BJ (cell line): ENCODE measurements at regions of chr1 and their contacts with region 1.

Region 1: DNA sequence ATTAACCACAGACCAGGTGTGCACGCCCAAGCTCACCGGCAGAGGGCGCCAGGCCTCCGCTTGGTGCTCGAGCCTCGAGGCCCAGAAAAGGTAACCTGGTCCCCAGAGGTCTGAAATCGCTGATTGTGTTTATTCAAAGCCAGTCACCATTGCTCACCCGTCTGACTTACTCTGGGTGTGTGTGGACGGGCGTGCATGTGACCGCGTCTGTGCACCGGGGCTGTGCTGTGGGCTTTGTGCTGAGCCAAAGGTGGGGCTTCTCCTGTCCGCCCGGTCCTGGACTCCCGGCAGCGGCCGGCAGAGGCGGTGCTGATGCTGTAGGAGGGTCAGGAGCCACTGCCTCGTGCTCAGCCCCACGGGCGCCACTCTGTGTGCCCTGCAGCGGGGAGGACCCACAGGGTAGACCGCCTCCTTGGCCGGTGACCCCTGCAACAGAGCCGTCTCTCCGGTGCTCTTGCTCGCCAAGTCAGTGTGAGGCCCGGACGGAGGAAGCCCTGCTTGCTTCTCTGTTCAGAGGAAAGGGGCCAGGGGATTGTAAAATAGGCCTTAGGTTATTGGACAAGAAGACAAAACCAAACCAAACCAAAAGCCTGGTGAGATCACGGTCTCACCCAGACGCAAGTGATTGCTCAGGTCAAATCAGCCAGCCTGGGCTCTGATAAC is 32.0 kb upstream of the BTG2 start:
- DNase-seq: no peak
- H3K4me3 ChIP-seq: no peak overlapping the region
- H3K27me3 ChIP-seq: no peaks in the 10 kb centered on the region
- CTCF ChIP-seq: peak; percentile 98

Region 2: DNA sequence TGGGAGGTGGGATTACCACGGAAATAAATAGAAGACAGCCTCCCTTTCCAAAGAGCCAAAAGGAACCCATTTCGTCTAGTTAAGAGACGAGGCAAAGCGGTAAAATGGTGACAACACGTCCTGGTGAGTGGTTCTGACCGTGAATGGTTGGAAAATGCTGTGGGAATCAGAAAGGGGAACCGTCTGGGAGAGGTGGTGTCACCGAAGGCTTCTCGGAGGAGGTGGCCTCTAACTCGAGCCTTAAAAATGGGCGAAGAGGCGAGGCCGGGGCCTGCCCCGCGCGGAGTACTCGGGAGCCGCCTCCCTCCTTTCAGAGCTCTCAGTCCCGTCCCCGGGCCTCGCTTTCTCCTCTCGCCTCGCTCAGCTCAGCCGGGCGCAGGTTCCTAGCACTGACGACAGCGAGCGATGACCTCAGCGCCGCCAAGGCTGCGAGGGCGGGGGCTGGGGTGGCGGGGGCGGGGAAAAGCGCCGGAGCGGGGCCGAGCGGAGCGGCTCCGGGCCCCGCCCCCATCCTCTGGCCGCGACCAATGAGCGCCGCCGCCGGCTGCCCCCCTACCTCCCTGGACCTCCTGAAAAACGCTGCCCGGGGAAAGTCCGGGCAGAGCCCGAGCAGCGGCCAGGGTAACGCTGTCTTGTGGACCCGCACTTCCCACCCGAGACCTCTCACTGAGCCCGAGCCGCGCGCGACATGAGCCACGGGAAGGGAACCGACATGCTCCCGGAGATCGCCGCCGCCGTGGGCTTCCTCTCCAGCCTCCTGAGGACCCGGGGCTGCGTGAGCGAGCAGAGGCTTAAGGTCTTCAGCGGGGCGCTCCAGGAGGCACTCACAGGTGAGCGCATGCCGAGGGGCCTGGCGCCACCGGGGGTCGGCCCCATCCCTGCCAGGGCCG is 31.8 kb after region 1 on chr1 and contains the start of gene BTG2:
- CTCF ChIA-PET with region 1: interaction called, 23 read pairs
- POLR2A ChIA-PET with region 1: interaction called, 17 read pairs
- DNase-seq: peak; percentile 31
- H3K4me3 ChIP-seq: peak within 1 kb of the TSS; percentile 93
- H3K27me3 ChIP-seq: no peaks in the 10 kb centered on the region; the same call in 1 of the 2 replicates
- CTCF ChIP-seq: no peak
- polyA plus RNA-seq, gene BTG2: 22.8 and 23.7 TPM in 2 replicates

Region 3: GRCh38 chr1:203326830-203327683 is 53.7 kb after region 1 on chr1:
- CTCF ChIA-PET with region 1: interaction called, 484 read pairs
- POLR2A ChIA-PET with region 1: no interaction called
- DNase-seq: no peak
- H3K4me3 ChIP-seq: peak overlapping the region; percentile 49
- H3K27me3 ChIP-seq: peaks cover 32% of the 10 kb centered on the region
- CTCF ChIP-seq: no peak